Right cardiac atrium (tissue), 5 donors: ENCODE measurements at regions of chr1 and their contacts with region 1.

Region 1: DNA sequence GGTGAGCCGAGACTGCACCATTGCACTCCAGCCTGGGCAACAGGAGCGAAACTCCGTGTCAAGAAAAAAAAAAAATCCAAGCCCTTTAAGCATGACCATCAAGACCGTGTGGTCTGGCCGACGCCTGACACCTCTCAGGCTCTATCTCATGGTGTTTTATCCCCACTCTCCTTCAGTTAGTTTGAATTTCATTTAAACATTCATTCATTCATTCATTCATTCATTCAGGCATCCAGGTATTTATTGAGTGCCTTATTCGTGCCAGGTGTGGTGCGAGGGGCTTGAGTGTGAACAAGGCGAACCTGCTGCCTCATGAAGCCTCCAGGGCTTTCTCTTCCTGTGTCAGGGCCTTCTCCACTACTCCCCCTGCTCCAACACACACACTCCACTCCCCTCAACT is 22.6 kb upstream of the OPRD1 start:
- DNase-seq: no peak
- ATAC-seq: no peak
- H3K4me3 ChIP-seq: no peak overlapping the region
- H3K27ac ChIP-seq: no peak overlapping the region
- H3K4me1 ChIP-seq: no peaks in the 10 kb centered on the region
- H3K27me3 ChIP-seq: no peaks in the 10 kb centered on the region

Region 2: GRCh38 chr1:28871631-28872401 is 82.4 kb after region 1 on chr1:
- intact Hi-C with region 1: loop called (anchors 1 to 5 kb)
- DNase-seq: no peak
- ATAC-seq: no peak
- H3K4me3 ChIP-seq: no peak overlapping the region
- H3K27ac ChIP-seq: no peak overlapping the region
- H3K4me1 ChIP-seq: no peaks in the 10 kb centered on the region
- H3K27me3 ChIP-seq: no peaks in the 10 kb centered on the region